Transverse colon (tissue), 4 donors: ENCODE measurements at regions of chr20 and their contacts with region 1.

Region 1: GRCh38 chr20:63394069-63394919 is 33.1 kb upstream of the CHRNA4 start:
- DNase-seq: no peak
- H3K4me3 ChIP-seq: no peak overlapping the region
- H3K27ac ChIP-seq: no peak overlapping the region
- H3K4me1 ChIP-seq: no peaks in the 10 kb centered on the region
- H3K27me3 ChIP-seq: peaks cover 18% of the 10 kb centered on the region
- CTCF ChIP-seq: no peak
- EP300 ChIP-seq: no peak
- POLR2A ChIP-seq: no peak

Region 2: DNA sequence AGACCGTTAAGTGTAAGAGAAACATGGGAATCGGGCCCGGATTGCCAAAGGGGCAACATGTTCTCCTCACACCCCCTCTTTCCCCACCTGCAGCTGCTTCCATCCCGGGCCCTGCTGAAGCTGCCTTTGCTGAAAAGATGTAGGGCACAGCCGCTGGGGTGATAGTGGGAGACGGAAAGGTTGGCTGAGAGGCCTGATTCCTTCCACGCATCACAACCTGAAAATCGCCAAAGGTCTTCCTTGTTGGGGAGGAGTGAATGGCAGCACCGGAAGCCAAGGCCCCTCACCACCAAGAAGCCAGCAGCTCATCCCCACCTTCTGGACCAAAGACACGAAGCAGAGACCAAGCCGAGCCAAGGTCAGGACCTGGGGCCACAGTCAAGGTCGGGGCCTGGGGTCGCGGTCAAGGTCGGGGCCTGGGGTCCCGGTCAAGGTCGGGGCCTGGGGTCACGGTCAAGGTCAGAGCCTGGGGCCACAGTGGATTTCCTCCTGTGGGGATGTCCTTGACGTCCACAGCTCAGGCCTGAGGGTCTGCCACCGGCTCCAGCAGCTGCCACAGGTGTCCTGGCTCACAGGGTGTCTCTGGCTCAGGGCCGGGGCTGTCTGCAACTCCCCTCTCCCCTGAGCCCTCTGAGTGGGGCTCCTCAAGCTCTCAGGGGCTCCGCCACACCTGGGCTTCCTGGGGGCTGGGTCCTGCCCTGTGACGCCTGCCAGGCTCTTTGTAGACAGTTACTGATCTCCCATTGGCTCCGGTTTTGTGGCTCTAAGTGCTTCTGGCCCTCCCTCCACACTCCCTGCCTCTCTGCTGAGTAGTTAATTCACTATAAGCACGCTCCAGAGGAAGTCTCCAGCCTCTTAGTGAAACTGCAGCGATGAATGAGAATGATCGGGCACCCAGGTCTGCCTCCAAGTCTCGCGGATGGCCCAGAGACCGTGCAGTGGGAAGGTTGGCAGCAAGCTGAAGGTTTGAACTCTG is 27.6 kb before region 1 on chr20:
- in situ Hi-C with region 1: no loop called
- intact Hi-C with region 1: loop called (anchors 1 kb)
- DNase-seq: no peak
- H3K4me3 ChIP-seq: no peak overlapping the region
- H3K27ac ChIP-seq: no peak overlapping the region
- H3K4me1 ChIP-seq: no peaks in the 10 kb centered on the region
- H3K27me3 ChIP-seq: peaks cover 49% of the 10 kb centered on the region
- CTCF ChIP-seq: no peak
- EP300 ChIP-seq: no peak
- POLR2A ChIP-seq: no peak